ENCODE measurements at regions of chr9 and their contacts with region 1.

Region 1: DNA sequence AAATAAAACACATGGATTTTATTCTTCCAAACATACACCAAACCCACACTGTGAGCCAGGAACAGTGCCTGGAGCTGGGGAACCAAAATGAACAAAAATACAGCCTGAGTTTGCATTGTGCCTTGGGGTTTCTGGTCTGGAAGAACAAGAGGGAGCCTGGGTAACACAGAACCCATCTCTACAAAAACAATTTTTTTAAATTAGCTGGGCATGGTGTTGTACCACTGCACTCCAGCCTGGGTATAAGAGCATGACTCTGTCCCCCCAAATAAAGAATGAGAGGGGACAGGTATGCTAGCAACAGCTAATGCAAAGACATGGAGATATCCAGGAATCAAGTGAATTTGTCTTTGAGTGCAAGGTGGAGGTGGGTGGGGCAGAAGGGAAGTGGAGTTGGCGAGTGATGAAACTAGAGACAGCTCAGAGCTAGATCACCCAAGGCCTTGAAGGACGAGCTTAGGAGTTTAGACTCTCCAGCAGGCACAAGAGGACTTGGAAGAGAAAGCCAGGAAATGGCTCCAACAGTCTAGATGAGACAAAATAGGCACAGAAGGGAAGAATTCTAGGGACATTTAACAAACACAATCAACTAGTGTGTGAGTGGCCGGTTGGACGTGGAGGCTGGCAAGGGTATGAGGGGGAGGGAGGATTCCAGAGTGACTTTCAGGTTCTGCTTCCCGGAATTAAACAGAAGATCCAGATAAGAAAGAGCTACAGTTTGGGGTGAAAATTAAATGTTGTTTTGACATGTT is 47.4 kb downstream of the FNBP1 start:
- DNase-seq: peak; percentile 60
- ATAC-seq: peak; percentile 63
- H3K4me3 Mint-ChIP-seq: peak overlapping the region; percentile 60
- H3K27ac Mint-ChIP-seq: peak overlapping the region; percentile 85
- H3K4me1 Mint-ChIP-seq: peaks cover 77% of the 10 kb centered on the region
- H3K27me3 Mint-ChIP-seq: no peaks in the 10 kb centered on the region

Region 2: GRCh38 chr9:129954868-129955550 is 40.6 kb before region 1 on chr9:
- CTCF ChIA-PET with region 1: interaction called, 10 read pairs
- DNase-seq: no peak
- ATAC-seq: peak; percentile 3
- H3K4me3 Mint-ChIP-seq: no peak overlapping the region
- H3K27ac Mint-ChIP-seq: peak overlapping the region; percentile 80
- H3K4me1 Mint-ChIP-seq: peaks cover 51% of the 10 kb centered on the region
- H3K27me3 Mint-ChIP-seq: no peaks in the 10 kb centered on the region

Region 3: GRCh38 chr9:130042833-130043653 is 47.5 kb after region 1 on chr9 and contains the start of gene FNBP1:
- CTCF ChIA-PET with region 1: interaction called, 12 read pairs
- DNase-seq: peak; percentile 83
- ATAC-seq: peak; percentile 60
- H3K4me3 Mint-ChIP-seq: peak within 1 kb of the TSS; percentile 98
- H3K27ac Mint-ChIP-seq: peak within 1 kb of the TSS; percentile 97
- H3K4me1 Mint-ChIP-seq: peaks cover 45% of the 10 kb centered on the region
- H3K27me3 Mint-ChIP-seq: no peaks in the 10 kb centered on the region
- total RNA-seq, gene FNBP1: 153 to 167 TPM

Measured in activated CD8-positive, alpha-beta memory T cell treated with anti-CD3 and anti-CD28 coated beads, Interleukin-2, amount 10 ng/mL, durations not matched to agents 7 days and 5 days (primary cell).